ENCODE measurements at regions of chr5 and their contacts with region 1.

Region 1: GRCh38 chr5:157130925-157131324 is 11.7 kb downstream of the MED7 start:
- DNase-seq: no peak
- ATAC-seq: no peak
- H3K4me3 ChIP-seq: no peak overlapping the region
- H3K4me3 Mint-ChIP-seq: no peak overlapping the region
- H3K27ac ChIP-seq: no peak overlapping the region
- H3K27ac Mint-ChIP-seq: no peak overlapping the region
- H3K4me1 ChIP-seq: no peaks in the 10 kb centered on the region
- H3K4me1 Mint-ChIP-seq: peaks cover 6 to 46% (median 26%) of the 10 kb centered on the region in 7 donors
- H3K27me3 ChIP-seq: no peaks in the 10 kb centered on the region
- H3K27me3 Mint-ChIP-seq: no peaks in the 10 kb centered on the region

Region 2: DNA sequence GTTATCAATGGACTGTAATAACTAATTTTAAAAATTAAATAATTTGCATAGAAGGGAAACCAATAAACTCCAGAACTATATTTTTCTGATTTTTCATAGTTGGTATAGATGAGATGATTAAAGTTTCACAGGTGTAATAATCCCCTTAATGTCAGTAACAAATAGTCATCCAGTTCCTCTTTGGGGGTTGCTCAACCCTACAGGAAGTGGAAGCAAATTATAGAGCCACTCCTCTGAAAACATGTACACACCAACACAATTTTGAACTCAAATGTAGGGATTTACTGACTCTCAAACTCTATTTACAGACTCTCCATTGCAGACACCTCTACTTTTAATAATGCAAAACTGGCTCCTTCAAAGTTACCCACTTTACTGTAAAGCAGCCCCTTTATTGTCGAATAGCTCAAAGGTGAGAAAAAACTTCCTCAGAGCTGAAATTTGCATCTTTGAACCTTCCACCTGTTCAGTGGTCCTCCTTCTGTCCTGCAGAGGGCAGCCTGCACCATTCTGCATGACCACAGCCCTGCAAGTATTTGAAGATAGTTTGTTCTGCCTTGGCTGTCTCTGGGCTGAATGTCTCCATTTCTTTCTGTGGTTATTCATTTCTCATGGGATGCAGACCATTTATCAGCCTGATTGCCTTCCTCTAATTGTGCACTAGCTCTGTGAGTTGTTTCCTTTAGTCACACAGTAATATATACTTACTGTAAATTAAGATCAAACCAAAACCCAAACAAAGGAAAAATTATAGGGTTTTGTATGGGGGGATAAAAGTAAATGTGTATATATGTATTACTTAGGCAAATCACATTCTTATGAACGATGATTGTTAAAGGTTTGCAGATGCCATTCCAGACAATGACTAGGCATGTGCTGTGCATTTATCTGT is 1187.2 kb before region 1 on chr5:
- CTCF ChIA-PET with region 1: interaction called, 3 read pairs
- POLR2A ChIA-PET with region 1: no interaction called
- intact Hi-C with region 1: loop called in 1 of 2 experiments (anchors 1 kb)
- DNase-seq: peak in 8 of 9 donors; percentile 1 to 31 (median 22)
- ATAC-seq: peak; percentile 62
- H3K4me3 ChIP-seq: no peak overlapping the region
- H3K4me3 Mint-ChIP-seq: no peak overlapping the region
- H3K27ac ChIP-seq: no peak overlapping the region
- H3K27ac Mint-ChIP-seq: peak overlapping the region in 1 of 9 donors; percentile 32
- H3K4me1 ChIP-seq: no peaks in the 10 kb centered on the region
- H3K4me1 Mint-ChIP-seq: peaks cover 0 to 6% (median 0%) of the 10 kb centered on the region in 7 donors
- H3K27me3 ChIP-seq: no peaks in the 10 kb centered on the region
- H3K27me3 Mint-ChIP-seq: peaks cover 11 to 25% (median 19%) of the 10 kb centered on the region in 5 donors

Region 3: GRCh38 chr5:156815988-156816599 is 314.8 kb before region 1 on chr5:
- CTCF ChIA-PET with region 1: no interaction called
- POLR2A ChIA-PET with region 1: no interaction called
- intact Hi-C with region 1: loop called in 1 of 2 experiments (anchors 5 kb)
- DNase-seq: peak in 3 of 9 donors; percentile 7 to 42 (median 20)
- ATAC-seq: no peak
- H3K4me3 ChIP-seq: no peak overlapping the region
- H3K4me3 Mint-ChIP-seq: no peak overlapping the region
- H3K27ac ChIP-seq: no peak overlapping the region
- H3K27ac Mint-ChIP-seq: peak overlapping the region in 1 of 9 donors; percentile 8
- H3K4me1 ChIP-seq: no peaks in the 10 kb centered on the region
- H3K4me1 Mint-ChIP-seq: peaks cover 0 to 6% (median 0%) of the 10 kb centered on the region in 7 donors
- H3K27me3 ChIP-seq: no peaks in the 10 kb centered on the region
- H3K27me3 Mint-ChIP-seq: peaks cover 0 to 2% (median 0%) of the 10 kb centered on the region in 5 donors

Region 4: DNA sequence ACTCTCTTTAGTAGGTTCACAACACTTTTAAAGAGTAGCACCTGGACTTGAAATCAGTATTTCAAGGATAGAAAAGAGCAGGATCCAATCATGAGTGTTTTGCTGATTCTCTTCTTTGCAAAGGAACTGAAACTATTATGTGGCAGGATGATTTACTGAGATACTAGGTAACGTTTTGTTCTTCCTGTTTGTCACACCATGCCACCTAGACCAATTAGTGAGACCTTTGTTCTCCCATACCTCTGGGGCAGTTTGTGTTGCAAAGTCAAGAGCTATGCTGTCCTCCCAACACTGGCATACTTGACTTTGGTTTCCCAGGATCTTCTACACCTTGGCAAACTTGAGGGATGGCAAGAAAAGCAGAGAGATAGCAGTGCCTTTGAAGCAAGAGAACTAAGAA is 237.4 kb before region 1 on chr5:
- CTCF ChIA-PET with region 1: interaction called, 17 read pairs
- POLR2A ChIA-PET with region 1: interaction called, 6 read pairs
- intact Hi-C with region 1: loop called in 1 of 2 experiments (anchors 1 kb)
- DNase-seq: no peak
- ATAC-seq: no peak
- H3K4me3 ChIP-seq: no peak overlapping the region
- H3K4me3 Mint-ChIP-seq: peak overlapping the region in 5 of 10 donors; percentile 12 to 58 (median 19)
- H3K27ac ChIP-seq: no peak overlapping the region
- H3K27ac Mint-ChIP-seq: peak overlapping the region in 6 of 9 donors; percentile 2 to 93 (median 58)
- H3K4me1 ChIP-seq: peaks cover 0 to 15% of the 10 kb centered on the region in 2 donors
- H3K4me1 Mint-ChIP-seq: peaks cover 21 to 52% (median 32%) of the 10 kb centered on the region in 7 donors
- H3K27me3 ChIP-seq: no peaks in the 10 kb centered on the region
- H3K27me3 Mint-ChIP-seq: no peaks in the 10 kb centered on the region

Region 5: DNA sequence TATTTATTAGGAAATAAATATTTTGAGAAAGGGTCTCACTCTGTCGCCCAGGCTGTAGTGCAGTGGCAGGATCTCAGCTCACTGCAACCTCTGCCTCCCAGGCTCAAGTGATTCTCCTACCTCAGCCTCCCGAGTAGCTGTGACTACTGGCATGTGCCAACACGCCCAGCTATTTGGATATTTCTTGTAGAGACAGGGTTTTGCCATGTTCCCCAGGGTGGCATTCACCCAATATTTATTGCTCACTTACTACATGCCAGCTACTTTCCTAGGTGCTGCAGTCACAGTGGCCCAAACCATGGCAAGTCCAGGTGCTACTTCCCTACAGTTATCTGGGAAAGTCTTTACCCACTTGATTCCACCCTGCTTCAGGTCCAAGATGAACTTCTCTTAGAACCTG is 20.1 kb after region 1 on chr5:
- CTCF ChIA-PET with region 1: no interaction called
- POLR2A ChIA-PET with region 1: no interaction called
- intact Hi-C with region 1: no loop called
- DNase-seq: no peak
- ATAC-seq: no peak
- H3K4me3 ChIP-seq: no peak overlapping the region
- H3K4me3 Mint-ChIP-seq: no peak overlapping the region
- H3K27ac ChIP-seq: no peak overlapping the region
- H3K27ac Mint-ChIP-seq: peak overlapping the region in 7 of 9 donors; percentile 1 to 88 (median 65)
- H3K4me1 ChIP-seq: peaks cover 27 to 38% of the 10 kb centered on the region in 2 donors
- H3K4me1 Mint-ChIP-seq: peaks cover 37 to 70% (median 58%) of the 10 kb centered on the region in 7 donors
- H3K27me3 ChIP-seq: no peaks in the 10 kb centered on the region
- H3K27me3 Mint-ChIP-seq: no peaks in the 10 kb centered on the region

Measured in naive thymus-derived CD4-positive, alpha-beta T cell (primary cell).